ENCODE measurements at regions of chr15 and their contacts with region 1.

Region 1: GRCh38 chr15:41465822-41466421 is 27.8 kb upstream of the ITPKA start:
- DNase-seq: peak; percentile 48
- ATAC-seq: peak; percentile 92
- H3K4me3 Mint-ChIP-seq: no peak overlapping the region
- H3K27ac Mint-ChIP-seq: no peak overlapping the region
- H3K4me1 Mint-ChIP-seq: peaks cover 4% of the 10 kb centered on the region
- H3K27me3 Mint-ChIP-seq: no peaks in the 10 kb centered on the region
- CTCF ChIP-seq: peak; percentile 99

Region 2: GRCh38 chr15:41350057-41350717 is 115.7 kb before region 1 on chr15:
- CTCF ChIA-PET with region 1: no interaction called
- POLR2A ChIA-PET with region 1: no interaction called
- intact Hi-C with region 1: no loop called
- DNase-seq: no peak
- ATAC-seq: no peak
- H3K4me3 Mint-ChIP-seq: no peak overlapping the region
- H3K27ac Mint-ChIP-seq: no peak overlapping the region
- H3K4me1 Mint-ChIP-seq: no peaks in the 10 kb centered on the region
- H3K27me3 Mint-ChIP-seq: no peaks in the 10 kb centered on the region
- CTCF ChIP-seq: no peak

Region 3: DNA sequence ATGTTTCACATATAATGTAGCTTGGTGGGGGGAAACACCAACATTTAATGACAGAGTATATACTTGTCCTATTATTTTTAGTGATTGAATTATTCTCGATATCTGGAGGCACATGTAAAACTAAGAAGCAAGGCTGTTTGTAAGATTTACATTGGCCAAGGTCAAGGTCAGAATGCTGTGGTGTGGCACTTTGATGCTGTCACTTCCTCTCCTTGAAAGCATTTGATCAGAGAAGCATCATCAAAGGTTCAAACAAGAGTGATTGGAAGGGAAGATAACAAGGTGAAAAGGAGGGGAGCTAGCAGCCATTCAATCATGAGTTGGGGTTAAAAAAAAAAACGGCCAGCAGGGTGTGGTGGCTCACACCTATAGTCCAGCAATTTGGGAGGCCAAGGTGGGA is 22.6 kb before region 1 on chr15:
- CTCF ChIA-PET with region 1: interaction called, 16 read pairs
- POLR2A ChIA-PET with region 1: no interaction called
- intact Hi-C with region 1: no loop called
- DNase-seq: no peak
- ATAC-seq: no peak
- H3K4me3 Mint-ChIP-seq: no peak overlapping the region
- H3K27ac Mint-ChIP-seq: no peak overlapping the region
- H3K4me1 Mint-ChIP-seq: peaks cover 8% of the 10 kb centered on the region
- H3K27me3 Mint-ChIP-seq: no peaks in the 10 kb centered on the region
- CTCF ChIP-seq: no peak

Region 4: DNA sequence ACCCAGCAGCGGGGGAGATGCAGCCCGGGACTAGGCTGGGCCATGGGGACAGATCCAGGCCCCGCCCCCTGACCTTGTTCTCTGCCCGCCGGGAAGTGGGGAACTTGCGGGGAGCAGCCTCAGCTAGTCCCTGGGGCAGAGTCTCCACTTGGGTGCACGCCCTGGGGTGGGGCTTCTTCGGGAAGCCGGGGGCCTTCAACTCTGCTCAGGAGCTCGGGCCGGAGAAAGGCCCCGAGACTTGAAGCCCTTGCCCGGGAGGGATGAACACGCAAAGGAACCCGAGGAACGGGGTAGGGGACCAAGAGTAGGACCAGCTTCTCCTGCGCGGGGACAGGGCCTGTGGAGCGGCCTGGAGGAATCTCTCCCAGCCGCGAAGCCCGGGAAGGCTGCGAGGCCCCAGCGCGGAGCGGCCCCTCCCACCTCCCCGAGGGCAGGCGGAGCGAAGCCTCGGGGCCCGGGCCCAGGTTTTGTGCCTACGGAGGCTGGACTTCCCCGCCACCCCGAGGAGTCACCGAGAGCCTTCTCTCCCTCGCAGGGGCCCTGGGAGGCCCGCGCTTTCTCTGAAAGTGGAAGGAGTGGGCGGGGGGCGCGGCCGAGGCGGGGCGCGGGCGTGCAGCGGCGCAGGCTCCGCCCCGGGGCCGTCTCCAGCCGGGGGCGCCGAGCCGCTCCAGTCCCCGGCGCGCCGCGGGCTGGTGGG is 27.4 kb after region 1 on chr15 and contains the start of gene ITPKA:
- CTCF ChIA-PET with region 1: interaction called, 20 read pairs
- POLR2A ChIA-PET with region 1: interaction called, 3 read pairs
- intact Hi-C with region 1: no loop called
- DNase-seq: peak; percentile 95
- ATAC-seq: peak; percentile 79
- H3K4me3 Mint-ChIP-seq: peak within 1 kb of the TSS; percentile 68
- H3K27ac Mint-ChIP-seq: peak within 1 kb of the TSS; percentile 81
- H3K4me1 Mint-ChIP-seq: peaks cover 36% of the 10 kb centered on the region
- H3K27me3 Mint-ChIP-seq: peaks cover 41% of the 10 kb centered on the region
- CTCF ChIP-seq: no peak
- total RNA-seq, gene ITPKA: 4.7 to 6.1 TPM

Region 5: DNA sequence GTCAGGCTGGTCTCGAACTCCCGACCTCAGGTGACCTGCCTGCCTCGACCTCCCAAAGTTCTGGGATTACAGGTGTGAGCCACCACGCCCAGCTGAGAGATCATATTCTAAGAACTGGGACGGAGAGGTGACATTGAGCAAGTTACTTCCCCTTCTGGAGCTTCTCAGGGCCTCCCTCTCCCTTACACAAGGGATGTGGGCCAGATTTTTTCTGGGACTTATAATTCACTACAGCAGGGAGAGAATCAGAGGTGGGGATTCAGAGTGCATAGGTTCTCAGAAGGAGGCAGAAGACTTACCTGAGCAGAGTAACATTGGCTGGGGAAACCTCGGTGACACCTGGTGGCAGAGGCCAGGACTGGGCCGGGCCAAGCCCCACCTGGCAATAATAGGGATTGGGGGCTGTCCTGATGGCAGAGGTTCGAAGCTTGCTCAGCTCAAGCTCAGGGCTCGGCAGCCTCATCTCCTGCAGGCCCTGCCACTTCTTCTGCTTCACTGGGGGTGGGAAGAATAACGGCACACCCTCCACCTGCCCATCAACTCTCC is 40.9 kb after region 1 on chr15:
- CTCF ChIA-PET with region 1: interaction called, 39 read pairs
- POLR2A ChIA-PET with region 1: interaction called, 5 read pairs
- intact Hi-C with region 1: loop called (anchors 5 kb)
- DNase-seq: no peak
- ATAC-seq: peak; percentile 35
- H3K4me3 Mint-ChIP-seq: no peak overlapping the region
- H3K27ac Mint-ChIP-seq: no peak overlapping the region
- H3K4me1 Mint-ChIP-seq: peaks cover 7% of the 10 kb centered on the region
- H3K27me3 Mint-ChIP-seq: peaks cover 40% of the 10 kb centered on the region
- CTCF ChIP-seq: no peak

Region 6: GRCh38 chr15:41544650-41545015 is 78.7 kb after region 1 on chr15:
- CTCF ChIA-PET with region 1: interaction called, 20 read pairs
- POLR2A ChIA-PET with region 1: interaction called, 7 read pairs
- intact Hi-C with region 1: no loop called
- DNase-seq: peak; percentile 45
- ATAC-seq: no peak
- H3K4me3 Mint-ChIP-seq: peak overlapping the region; percentile 97
- H3K27ac Mint-ChIP-seq: peak overlapping the region; percentile 93
- H3K4me1 Mint-ChIP-seq: peaks cover 15% of the 10 kb centered on the region
- H3K27me3 Mint-ChIP-seq: peaks cover 2% of the 10 kb centered on the region
- CTCF ChIP-seq: no peak

Region 7: DNA sequence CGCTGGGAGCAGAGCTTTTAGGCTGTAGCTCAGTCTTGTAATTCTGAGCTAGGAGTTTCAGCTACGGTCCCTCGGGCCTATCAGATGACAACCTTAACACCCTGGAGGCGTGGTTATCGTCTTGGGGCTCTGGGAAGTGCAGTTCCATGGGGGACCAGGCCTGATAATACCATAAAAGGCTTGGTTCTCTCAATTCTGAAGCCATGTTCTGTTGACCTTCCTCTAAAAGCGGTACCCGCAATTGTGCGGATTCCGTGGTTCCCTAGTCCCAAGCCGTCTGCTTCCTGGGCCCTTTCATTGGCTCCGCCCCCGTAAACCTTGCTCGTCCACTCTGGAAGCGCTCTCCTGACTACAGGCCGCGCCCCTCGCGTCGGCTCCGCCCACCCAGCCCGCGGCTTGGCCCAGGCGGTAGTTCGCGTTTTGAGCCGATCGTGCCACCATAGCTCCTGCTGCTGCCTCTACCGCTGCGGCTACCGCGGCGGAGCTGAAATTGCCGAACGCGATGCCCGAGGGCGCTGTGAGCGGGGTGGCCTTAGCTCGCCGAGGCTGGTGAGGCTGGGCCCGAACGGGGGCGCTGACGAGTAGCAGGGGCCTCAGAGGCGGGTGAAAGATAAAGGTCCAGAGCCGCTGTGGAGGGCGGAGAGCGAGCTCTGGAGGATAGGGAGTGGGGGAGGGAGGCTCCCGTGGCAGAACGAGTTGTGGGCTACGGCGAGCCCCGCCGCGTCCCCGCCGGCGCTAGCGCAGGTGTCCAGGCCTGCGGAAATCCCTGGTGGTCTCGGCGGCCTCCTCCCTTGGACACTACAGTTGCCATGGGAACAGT is 308.4 kb after region 1 on chr15 and contains the start of gene MAPKBP1:
- CTCF ChIA-PET with region 1: interaction called, 16 read pairs
- POLR2A ChIA-PET with region 1: no interaction called
- intact Hi-C with region 1: no loop called
- DNase-seq: peak; percentile 99
- ATAC-seq: peak; percentile 92
- H3K4me3 Mint-ChIP-seq: peak within 1 kb of the TSS; percentile 91
- H3K27ac Mint-ChIP-seq: peak within 1 kb of the TSS; percentile 92
- H3K4me1 Mint-ChIP-seq: peaks cover 56% of the 10 kb centered on the region
- H3K27me3 Mint-ChIP-seq: no peaks in the 10 kb centered on the region
- CTCF ChIP-seq: peak; percentile 59
- total RNA-seq, gene MAPKBP1: 16.6 to 17.2 TPM